Right ventricle myocardium inferior (tissue), 1 donor: ENCODE measurements at regions of chr11 and their contacts with region 1.

Region 1: GRCh38 chr11:119481021-119481666 is 58.2 kb upstream of the THY1 start:
- DNase-seq: peak; percentile 86
- ATAC-seq: peak; percentile 78

Region 2: DNA sequence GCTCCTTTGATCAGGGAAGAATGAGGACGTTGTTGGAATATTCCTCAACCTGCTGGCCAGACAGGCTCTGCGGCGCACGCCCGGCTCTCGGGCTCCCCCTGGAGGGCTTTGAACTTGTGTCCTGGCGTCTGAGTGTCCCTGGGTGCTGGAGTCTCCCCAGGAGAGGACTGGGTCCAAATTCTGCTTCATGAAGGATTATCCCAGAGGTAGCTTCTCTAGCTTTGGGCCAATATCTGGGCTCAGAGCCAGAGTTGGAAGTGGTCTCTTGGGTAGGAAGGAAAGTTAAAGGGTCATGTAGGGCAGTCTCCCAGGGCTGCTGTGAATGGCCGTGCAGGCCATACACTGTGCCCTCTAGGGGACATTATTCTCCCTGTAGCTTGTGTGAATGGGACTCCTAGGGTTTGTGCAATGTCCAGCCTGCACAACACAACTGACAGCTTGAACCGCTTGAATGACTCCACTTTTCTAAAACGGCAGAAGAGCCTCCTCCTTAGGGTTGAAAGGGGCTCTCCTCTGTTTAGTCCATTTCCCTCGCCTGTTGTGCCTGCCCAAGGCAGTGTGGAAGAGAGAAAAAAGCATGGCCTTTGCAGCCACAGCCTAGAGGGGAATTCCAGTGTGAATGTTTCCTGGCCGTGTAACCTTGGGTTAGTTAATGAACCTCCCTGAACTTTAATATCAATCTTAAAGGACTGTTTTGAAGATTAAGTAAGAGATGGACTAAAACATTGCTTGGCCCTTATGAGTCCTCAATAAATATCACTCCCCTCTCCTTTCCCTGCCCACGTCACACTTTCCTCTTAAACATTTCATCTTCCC is 53.0 kb after region 1 on chr11:
- intact Hi-C with region 1: loop called (anchors 2 kb)
- DNase-seq: peak; percentile 88
- ATAC-seq: peak; percentile 72

Region 3: GRCh38 chr11:119567688-119568582 is 86.8 kb after region 1 on chr11:
- intact Hi-C with region 1: no loop called
- DNase-seq: no peak
- ATAC-seq: peak; percentile 65

Region 4: DNA sequence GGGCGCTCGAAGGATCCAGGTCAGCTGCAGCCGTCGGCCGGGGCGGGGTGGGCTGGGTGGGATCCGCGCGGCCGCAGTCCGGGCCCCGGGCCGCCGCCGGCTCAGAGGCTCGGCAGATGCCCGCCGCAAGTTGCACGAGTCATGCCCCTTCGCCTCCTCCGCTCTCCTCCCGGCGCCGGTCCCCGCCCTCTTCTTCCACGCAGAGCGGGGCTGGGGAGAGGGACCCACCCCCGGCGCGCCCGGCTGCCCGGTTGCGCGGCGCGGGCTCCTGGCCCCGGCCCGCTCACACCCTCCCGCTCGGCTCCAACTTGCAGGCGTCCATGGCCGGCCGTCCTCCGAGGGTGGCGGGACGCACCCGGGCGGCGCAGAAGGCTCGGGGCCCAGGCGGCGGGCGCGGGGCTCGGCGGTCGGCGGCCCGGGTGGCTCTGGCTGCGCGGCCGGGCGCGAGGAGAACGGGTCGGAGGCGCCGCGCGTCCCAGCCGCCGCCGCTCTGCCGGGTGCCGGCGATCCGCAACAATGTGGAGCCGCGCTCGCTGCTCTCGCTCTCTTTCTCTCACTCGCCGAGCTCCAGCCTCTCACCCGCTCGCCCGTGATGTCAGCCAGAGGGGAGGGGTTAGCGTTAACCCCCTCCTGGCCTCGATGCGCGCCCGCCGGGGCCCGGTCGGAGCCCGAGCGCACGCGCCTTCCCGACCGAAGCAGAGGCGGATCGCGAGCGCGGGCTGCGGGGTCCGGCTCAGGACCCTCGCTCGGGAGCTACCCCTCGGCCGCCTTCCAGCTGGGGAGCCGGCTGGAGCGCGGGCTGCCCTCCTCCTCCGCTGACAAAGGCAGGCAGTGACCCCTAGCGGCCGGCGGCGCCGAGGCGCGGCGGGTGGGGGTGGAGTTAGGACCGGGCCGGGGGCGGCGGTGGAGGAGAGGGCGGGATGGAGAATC is 247.8 kb after region 1 on chr11 and contains the start of gene NECTIN1:
- intact Hi-C with region 1: loop called (anchors 10 kb)
- DNase-seq: peak; percentile 95
- ATAC-seq: peak; percentile 94
- total RNA-seq, gene NECTIN1: 20.0 TPM

Region 5: GRCh38 chr11:120013325-120014270 is 532.5 kb after region 1 on chr11:
- intact Hi-C with region 1: loop called (anchors 10 kb)
- DNase-seq: no peak
- ATAC-seq: peak; percentile 59

Region 6: DNA sequence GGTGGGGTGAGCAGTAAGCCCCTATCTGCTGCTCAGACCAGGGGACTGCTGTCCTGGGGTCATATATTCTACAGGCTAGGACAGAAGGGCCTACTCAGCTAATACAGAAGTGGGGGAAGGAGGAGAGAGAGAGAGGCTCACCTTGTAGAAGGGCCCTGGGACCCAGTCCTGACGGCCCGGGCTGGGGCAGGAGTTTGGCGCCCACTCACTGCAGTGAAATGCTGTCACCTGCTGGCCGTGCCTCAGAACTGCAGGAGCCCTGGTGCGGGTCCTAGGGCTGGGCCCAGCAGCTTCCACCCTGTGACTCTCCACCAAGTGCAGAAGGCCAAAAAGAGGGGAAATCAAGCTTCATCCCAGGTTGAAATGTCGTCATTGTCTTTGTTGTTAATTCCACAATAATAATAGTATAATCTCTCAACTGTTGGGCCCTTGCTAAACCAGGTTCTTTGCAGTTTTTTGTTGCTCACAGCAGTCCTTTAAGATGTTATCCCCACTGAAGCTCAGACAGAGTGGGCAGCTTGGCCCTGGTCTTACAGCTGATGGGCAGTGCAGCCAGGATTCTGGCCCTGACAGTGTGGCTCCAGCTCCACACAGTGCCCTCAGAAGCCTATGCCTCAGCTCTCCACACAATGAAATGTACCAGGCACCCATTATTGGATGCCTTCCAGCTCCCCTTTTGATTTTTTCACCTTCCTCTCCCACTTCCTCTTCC is 627.2 kb after region 1 on chr11:
- intact Hi-C with region 1: loop called (anchors 1 kb)
- DNase-seq: peak; percentile 74
- ATAC-seq: peak; percentile 76